HepG2 (cell line): ENCODE measurements at regions of chr14 and their contacts with region 1.

Region 1: GRCh38 chr14:65255536-65256461 is 153.5 kb upstream of the MAX start:
- DNase-seq: peak; percentile 69
- ATAC-seq: peak; percentile 82
- H3K4me3 ChIP-seq: peak overlapping the region; percentile 13 to 58 (median 20); a peak in 5 of 6 replicates
- H3K27ac ChIP-seq: peak overlapping the region; percentile 57
- H3K4me1 ChIP-seq: peaks cover 59% of the 10 kb centered on the region
- H3K27me3 ChIP-seq: no peaks in the 10 kb centered on the region
- CTCF ChIP-seq: peak; percentile 67
- EP300 ChIP-seq: 0 out of 4 replicates have a peak, but pooled peaks of 1 of the 2 experiments have one; percentile 2
- POLR2A ChIP-seq: no peak
- RAD21 ChIP-seq: no peak

Region 2: GRCh38 chr14:65054471-65055085 is 201.2 kb before region 1 on chr14:
- CTCF ChIA-PET with region 1: no interaction called
- POLR2A ChIA-PET with region 1: no interaction called
- in situ Hi-C with region 1: no loop called
- intact Hi-C with region 1: no loop called
- DNase-seq: no peak
- ATAC-seq: peak; percentile 61
- H3K4me3 ChIP-seq: no peak overlapping the region
- H3K27ac ChIP-seq: no peak overlapping the region
- H3K4me1 ChIP-seq: no peaks in the 10 kb centered on the region
- H3K27me3 ChIP-seq: no peaks in the 10 kb centered on the region
- CTCF ChIP-seq: no peak
- EP300 ChIP-seq: no peak
- POLR2A ChIP-seq: no peak
- RAD21 ChIP-seq: no peak

Region 3: DNA sequence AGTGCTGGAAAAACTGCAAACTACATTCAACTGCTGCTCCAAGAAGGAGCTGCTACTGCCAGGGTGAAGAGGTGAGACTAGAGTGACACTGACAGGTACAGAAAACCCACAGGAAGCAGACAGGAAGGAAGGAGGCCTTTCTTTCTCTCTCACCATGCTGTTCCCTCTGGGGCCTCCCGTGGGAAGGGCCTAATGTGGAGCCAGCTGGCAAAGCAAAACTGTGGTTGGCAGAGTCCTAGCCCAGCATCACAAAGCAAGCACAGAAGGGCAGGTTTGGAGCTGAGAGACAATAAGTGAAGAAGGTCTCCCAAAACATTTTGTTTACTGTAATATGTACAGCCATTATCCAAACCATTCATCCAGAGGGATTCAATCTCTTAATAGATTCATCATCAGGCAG is 31.0 kb before region 1 on chr14:
- CTCF ChIA-PET with region 1: no interaction called
- POLR2A ChIA-PET with region 1: interaction called, 43 read pairs
- in situ Hi-C with region 1: no loop called
- intact Hi-C with region 1: no loop called
- DNase-seq: no peak
- ATAC-seq: no peak
- H3K4me3 ChIP-seq: no peak overlapping the region
- H3K27ac ChIP-seq: no peak overlapping the region
- H3K4me1 ChIP-seq: peaks cover 65% of the 10 kb centered on the region
- H3K27me3 ChIP-seq: no peaks in the 10 kb centered on the region
- CTCF ChIP-seq: no peak
- EP300 ChIP-seq: no peak
- POLR2A ChIP-seq: no peak
- RAD21 ChIP-seq: no peak